Head of caudate nucleus (tissue), 42 donors: ENCODE measurements at regions of chr7 and their contacts with region 1.

Region 1: DNA sequence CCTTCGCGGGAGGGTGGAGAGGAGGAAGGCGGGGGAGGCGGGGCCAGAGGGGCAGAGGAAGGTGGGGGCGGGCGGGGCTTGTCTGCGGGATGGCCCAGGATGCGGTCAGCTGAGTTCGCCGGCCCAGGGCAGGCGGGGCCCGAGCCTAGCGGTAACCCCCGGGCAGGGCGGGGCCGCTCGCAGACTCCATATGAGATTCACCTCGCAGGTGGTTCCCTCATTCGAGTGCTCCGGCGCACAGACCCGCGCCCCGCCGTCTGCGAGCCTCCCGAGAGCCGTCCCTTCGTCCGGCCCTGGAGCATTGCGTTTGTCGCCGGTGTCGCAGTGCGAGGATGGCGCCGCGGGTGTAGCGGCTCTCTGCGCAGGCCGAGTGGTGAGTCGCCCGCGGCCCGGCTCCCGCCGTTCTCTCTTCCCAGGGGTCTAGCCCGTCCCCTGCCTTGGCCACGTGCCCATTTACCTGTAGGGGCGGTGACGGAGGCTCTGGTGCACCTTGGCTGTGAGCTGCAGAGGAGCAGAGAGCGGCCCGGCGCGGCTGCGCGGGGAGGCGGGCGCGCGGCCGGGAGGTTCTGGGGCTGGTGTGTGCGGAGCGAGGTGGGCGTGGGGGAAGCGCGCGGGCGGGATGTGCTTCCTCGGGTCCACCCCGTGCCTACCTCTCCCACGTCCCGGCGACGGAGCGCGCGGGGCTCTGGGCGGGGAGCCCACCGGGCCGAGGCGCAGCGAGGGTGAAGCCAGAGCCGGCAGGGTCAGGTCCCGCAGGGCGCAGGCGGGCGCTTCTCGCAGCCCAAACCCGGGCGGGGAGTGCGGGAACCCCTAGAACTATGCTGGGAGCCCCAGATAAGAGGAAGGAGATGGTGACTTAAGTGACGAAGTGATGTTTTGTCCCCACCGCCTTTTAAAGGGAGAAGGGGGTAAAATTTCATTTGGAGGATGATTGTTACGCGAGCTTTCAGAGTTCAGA is at the start of gene UPP1:
- DNase-seq: peak; percentile 42 to 94 (median 81)

Region 2: DNA sequence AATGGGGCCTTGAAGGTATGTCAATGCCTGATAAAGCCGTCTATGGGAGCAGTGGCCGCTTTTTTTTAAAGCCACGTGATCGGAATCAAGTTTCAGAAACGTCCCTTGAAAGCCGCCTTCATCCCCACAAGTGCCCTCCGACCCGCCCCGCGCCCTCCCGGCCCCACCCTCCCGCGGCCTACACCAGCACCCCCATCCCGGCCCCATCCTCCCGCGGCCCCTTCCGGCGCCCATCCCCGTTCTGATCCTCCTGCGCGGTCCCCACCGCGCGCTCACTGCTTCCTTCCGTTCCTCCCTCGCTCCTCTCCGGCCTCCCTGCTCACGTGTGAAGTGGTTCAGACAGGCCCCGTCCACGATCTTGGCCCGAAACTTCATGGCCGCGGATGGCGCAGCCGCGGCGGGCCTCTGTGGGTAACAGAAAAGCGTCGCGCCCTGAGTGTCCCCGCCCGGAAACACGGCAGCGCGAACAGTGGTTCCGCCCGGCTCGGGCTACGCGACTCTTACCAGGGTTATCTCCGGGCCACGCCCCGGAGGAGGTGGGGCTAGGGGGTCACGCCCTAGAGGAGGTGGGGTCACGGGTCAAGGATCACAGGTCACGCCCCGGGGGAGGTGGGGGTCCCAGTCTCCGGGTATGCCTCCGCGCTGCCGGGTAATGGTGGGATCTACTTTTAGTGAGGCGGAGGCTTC is 110.0 kb before region 1 on chr7 and contains the start of gene HUS1:
- intact Hi-C with region 1: loop called (anchors 10 kb)
- DNase-seq: peak; percentile 85 to 97 (median 92)